Gastrocnemius medialis (tissue), 4 donors: ENCODE measurements at regions of chr2 and their contacts with region 1.

Region 1: GRCh38 chr2:105369747-105370690 is 28.8 kb downstream of the FHL2 start:
- DNase-seq: peak; percentile 73 to 82
- ATAC-seq: peak; percentile 70 to 73
- H3K4me3 ChIP-seq: no peak overlapping the region
- H3K27ac ChIP-seq: peak overlapping the region in 2 of 4 donors; percentile 22 to 48
- H3K4me1 ChIP-seq: peaks cover 37 to 44% of the 10 kb centered on the region in 2 donors
- H3K27me3 ChIP-seq: no peaks in the 10 kb centered on the region
- CTCF ChIP-seq: peak; percentile 92 to 95 (median 93)
- POLR2A ChIP-seq: no peak

Region 2: DNA sequence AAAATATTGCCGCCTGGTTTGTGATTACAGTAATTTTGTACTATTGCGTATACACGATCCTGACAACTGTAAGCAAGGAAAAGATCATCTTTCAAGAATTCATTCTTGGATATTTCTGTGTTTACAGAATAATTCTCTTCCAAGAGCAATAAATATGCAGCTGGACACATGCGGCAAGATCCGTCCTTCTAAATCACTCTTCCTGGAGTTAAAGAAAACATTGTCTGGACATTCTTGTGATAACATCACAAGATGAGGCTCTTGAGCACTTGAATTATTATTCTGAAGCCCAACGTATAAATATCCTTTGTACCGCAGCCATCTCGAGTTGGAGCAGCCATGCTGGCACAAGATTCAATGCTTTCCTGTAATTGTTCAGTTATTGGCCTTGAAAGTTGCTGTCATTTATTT is 19.0 kb after region 1 on chr2:
- in situ Hi-C with region 1: no loop called
- intact Hi-C with region 1: no loop called
- DNase-seq: no peak
- ATAC-seq: peak; percentile 17 to 34
- H3K4me3 ChIP-seq: no peak overlapping the region
- H3K27ac ChIP-seq: peak overlapping the region; percentile 72 to 79 (median 76)
- H3K4me1 ChIP-seq: peaks cover 44 to 56% of the 10 kb centered on the region in 2 donors
- H3K27me3 ChIP-seq: no peaks in the 10 kb centered on the region
- CTCF ChIP-seq: no peak
- POLR2A ChIP-seq: no peak

Region 3: DNA sequence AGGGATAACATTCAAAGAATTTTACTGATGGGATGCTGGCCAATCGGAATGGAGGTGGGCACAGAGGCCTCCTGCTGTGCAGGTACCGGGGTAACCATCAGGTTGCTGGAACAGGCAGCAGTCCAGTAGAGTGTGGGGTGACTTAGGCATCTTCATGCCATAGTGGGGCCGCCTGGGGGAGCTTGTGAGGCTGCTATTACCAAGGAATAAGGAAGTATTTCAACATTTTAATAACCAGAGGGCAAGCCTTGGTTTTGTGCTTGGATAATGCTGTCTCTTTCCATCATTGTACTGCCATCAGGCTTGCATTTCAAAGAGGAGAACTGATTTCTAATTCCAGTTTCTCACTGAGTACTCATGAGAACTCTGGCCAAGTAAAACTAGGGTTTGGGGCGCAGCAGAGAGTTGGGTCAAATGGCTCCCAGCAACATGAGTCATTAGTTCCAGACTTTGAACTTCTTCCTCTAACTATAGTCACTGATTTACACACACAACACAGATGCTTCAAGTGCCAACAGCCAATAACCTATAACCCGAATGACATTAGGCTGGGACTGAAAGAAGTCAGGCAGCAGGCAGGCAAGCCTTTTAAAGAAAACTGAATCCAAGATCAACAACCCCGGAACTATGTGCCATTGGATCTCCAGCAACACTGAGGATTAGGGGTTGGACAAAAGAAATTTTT is 84.9 kb after region 1 on chr2:
- in situ Hi-C with region 1: no loop called
- intact Hi-C with region 1: loop called (anchors 5 kb)
- DNase-seq: peak in 1 of 2 donors; percentile 21
- ATAC-seq: peak in 1 of 2 donors; percentile 3
- H3K4me3 ChIP-seq: no peak overlapping the region
- H3K27ac ChIP-seq: peak overlapping the region in 3 of 4 donors; percentile 6 to 32 (median 21)
- H3K4me1 ChIP-seq: peaks cover 8 to 13% of the 10 kb centered on the region in 2 donors
- H3K27me3 ChIP-seq: no peaks in the 10 kb centered on the region
- CTCF ChIP-seq: no peak
- POLR2A ChIP-seq: no peak

Region 4: GRCh38 chr2:105521205-105521604 is 151.2 kb after region 1 on chr2:
- in situ Hi-C with region 1: loop called (anchors 5 kb)
- intact Hi-C with region 1: loop called (anchors 1 kb)
- DNase-seq: no peak
- ATAC-seq: no peak
- H3K4me3 ChIP-seq: no peak overlapping the region
- H3K27ac ChIP-seq: no peak overlapping the region
- H3K4me1 ChIP-seq: peaks cover 16 to 22% of the 10 kb centered on the region in 2 donors
- H3K27me3 ChIP-seq: no peaks in the 10 kb centered on the region
- CTCF ChIP-seq: peak; percentile 58 to 75 (median 64)
- POLR2A ChIP-seq: no peak